ENCODE measurements at regions of chr6 and their contacts with region 1.

Region 1: DNA sequence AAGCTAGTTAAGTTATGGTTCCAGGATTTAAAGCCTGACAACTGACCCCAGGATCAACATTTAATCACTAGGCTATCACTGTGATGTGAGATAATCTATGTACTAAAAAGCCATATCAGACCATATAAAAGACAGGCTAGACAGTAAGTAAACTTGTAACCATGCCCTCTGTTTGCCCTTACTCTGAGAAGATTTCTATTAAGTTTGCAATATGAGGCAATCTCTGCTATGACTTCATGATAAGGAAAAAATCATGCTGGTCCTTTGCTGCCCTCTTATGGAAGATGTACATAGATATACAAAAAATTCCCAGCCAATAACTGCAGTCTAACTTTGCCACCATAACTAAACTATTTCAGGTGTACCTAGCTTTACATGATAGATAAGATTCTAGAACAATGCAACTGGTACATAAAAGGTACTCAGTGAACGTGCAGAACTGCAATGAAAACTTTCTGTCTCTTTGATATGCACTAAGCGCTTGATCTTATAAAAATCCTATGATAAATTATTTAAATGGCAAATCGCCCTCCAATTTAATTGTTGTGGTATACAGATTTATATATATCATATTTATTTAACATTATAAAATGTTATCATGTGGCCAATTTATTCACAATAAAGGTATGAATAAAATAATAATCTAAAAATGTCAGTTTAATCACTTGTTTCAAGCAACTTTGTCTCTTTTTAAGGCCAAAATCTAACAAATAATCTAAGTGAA is 70.5 kb downstream of the FAM217A start:
- DNase-seq: peak; percentile 59
- H3K4me3 ChIP-seq: no peak overlapping the region
- H3K27ac ChIP-seq: no peak overlapping the region
- H3K27me3 ChIP-seq: no peaks in the 10 kb centered on the region
- CTCF ChIP-seq: peak; percentile 72

Region 2: DNA sequence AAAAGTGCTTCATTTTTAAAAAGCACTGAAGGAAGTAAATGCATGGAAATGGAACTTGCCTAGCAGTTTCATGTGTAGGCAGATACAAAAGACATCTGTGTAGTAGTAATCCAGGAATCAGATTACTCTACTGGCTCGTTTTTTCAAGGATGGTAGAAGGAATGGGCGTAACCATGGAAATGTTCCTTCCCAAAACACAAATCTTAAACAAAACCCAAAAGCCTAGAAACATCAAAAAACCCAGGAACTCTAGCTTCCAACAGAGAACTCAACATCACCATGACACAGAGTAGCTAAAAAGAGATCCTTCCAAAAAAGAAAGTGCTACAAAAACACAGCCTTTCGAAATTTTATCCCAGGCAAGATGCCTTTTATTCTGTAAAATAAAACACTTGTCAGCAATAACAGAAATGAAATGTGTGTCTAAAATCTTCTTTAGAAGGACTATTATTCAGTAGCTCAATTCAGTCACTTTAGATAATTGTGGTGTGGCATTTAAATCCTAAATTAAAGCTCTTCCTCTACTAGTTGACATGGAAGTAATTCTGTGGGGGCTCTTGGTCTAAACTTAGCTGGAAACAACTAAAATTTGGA is 11.2 kb before region 1 on chr6:
- CTCF ChIA-PET with region 1: interaction called, 10 read pairs
- POLR2A ChIA-PET with region 1: no interaction called
- DNase-seq: peak; percentile 39
- H3K4me3 ChIP-seq: peak overlapping the region; percentile 33
- H3K27ac ChIP-seq: no peak overlapping the region
- H3K27me3 ChIP-seq: no peaks in the 10 kb centered on the region
- CTCF ChIP-seq: no peak

Region 3: GRCh38 chr6:4178737-4179333 is 170.3 kb after region 1 on chr6:
- CTCF ChIA-PET with region 1: no interaction called
- POLR2A ChIA-PET with region 1: no interaction called
- DNase-seq: no peak
- H3K4me3 ChIP-seq: no peak overlapping the region
- H3K27ac ChIP-seq: no peak overlapping the region
- H3K27me3 ChIP-seq: peaks cover 23% of the 10 kb centered on the region
- CTCF ChIP-seq: no peak

Measured in AG04450 (cell line).